ENCODE measurements at regions of chr1 and their contacts with region 1.

Region 1: DNA sequence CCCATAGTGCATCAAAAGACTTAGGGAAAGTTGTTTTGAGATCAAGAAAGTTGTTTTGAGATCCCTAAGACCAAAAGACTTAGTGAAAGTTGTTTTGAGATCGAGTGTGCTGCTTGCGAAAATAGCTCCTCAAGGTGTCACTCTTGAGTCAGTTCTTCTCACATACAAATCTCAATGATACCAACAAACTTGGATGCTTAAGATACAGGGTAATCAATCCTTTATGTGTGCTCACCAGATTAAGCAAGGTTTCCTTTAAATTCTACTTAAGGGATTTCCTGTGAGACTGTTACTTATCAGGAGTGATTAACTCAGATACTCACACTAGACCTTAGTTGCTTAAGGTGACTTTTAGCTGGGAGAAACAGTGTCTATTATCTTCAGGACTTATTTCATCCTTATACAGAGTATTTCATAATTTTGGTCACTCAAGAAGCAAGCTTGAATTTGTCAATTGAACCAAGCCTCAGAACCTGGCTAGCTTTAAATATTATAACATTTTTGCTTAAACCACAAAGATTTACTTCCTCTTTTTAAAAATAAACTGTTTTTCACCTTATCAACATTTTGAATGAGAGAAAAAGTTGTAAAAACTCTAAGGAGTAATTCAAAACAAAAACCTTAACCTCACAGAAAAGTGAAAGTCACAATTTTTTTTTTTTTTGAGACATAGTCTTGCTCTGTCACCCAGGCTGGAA is 8.0 kb upstream of the RLF start:
- DNase-seq: peak in 3 of 4 experiments; percentile 25 to 78 (median 31)
- ATAC-seq: peak; percentile 84
- H3K4me3 ChIP-seq: no peak overlapping the region
- H3K27ac ChIP-seq: 0 out of 3 replicates have a peak overlapping the region, but pooled peaks have one; percentile 1
- H3K4me1 ChIP-seq: peaks cover 0 to 4% of the 10 kb centered on the region in 2 experiments; a peak in 4 of 5 replicates
- H3K27me3 ChIP-seq: no peaks in the 10 kb centered on the region
- CTCF ChIP-seq: peak; percentile 69 to 88 (median 86)
- EP300 ChIP-seq: no peak
- POLR2A ChIP-seq: no peak
- RAD21 ChIP-seq: peak; percentile 76 to 93

Region 2: GRCh38 chr1:40305457-40305856 is 152.2 kb after region 1 on chr1:
- CTCF ChIA-PET with region 1: interaction called, 3 read pairs
- POLR2A ChIA-PET with region 1: interaction called, 5 read pairs
- in situ Hi-C with region 1: loop called (anchors 10 kb)
- intact Hi-C with region 1: loop called (anchors 1 kb)
- DNase-seq: peak in 2 of 4 experiments; percentile 55 to 62
- ATAC-seq: peak; percentile 84
- H3K4me3 ChIP-seq: no peak overlapping the region
- H3K27ac ChIP-seq: no peak overlapping the region
- H3K4me1 ChIP-seq: peaks cover 0 to 20% of the 10 kb centered on the region in 2 experiments; a peak in 1 of 5 replicates
- H3K27me3 ChIP-seq: peaks cover 0 to 10% of the 10 kb centered on the region in 2 experiments; a peak in 2 of 5 replicates
- CTCF ChIP-seq: peak; percentile 74 to 78 (median 76)
- EP300 ChIP-seq: no peak
- POLR2A ChIP-seq: no peak
- RAD21 ChIP-seq: peak; percentile 36 to 89; a peak in 3 of 4 replicates

Region 3: GRCh38 chr1:40315239-40315794 is 162.1 kb after region 1 on chr1:
- CTCF ChIA-PET with region 1: interaction called, 3 read pairs
- POLR2A ChIA-PET with region 1: interaction called, 12 read pairs
- in situ Hi-C with region 1: no loop called
- intact Hi-C with region 1: no loop called
- DNase-seq: peak; percentile 90 to 93 (median 90)
- ATAC-seq: peak; percentile 87
- H3K4me3 ChIP-seq: no peak overlapping the region
- H3K27ac ChIP-seq: peak overlapping the region; percentile 31; the same call in 1 of the 3 replicates
- H3K4me1 ChIP-seq: peaks cover 36 to 67% of the 10 kb centered on the region in 2 experiments
- H3K27me3 ChIP-seq: no peaks in the 10 kb centered on the region
- CTCF ChIP-seq: peak; percentile 93 to 95 (median 95)
- EP300 ChIP-seq: 0 out of 2 replicates have a peak, but pooled peaks have one; percentile 21
- POLR2A ChIP-seq: peak; percentile 43; the same call in 1 of the 2 replicates
- RAD21 ChIP-seq: peak; percentile 64 to 85

Region 4: DNA sequence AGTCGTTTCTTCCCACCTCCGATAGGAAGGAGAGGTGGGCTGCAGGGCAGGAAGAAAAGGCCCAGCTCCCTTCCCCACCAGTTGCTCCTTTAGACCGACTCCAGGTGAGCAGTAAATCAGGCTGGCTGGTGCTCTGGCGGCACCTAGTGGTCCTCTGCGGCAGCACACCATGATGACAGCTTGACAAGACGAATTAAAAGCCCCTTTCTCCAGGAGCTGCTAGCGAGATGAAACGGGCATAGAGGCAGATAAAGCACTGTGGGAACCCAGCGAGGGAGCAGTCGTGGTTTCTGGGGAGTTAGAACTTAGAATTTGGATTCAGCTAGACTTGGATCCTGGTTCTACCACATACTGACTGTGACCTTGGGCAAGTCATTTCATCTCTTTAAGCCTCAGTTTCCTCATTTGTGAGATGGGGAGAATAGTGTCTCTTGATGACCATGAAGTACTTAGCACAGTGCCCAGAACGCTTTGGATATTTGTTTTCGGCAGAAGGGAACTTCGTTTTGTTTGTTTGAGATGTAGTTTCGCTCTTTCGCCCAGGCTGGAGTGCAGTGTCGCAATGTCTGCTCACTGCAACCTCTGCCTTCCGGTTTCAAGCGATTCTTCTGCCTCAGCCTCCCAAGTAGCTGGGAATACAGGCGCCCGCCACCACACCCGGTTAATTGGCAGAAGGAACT is 185.7 kb after region 1 on chr1:
- CTCF ChIA-PET with region 1: interaction called, 10 read pairs
- POLR2A ChIA-PET with region 1: interaction called, 4 read pairs
- in situ Hi-C with region 1: loop called (anchors 5 kb)
- intact Hi-C with region 1: no loop called
- DNase-seq: peak; percentile 82 to 93 (median 84)
- ATAC-seq: peak; percentile 90
- H3K4me3 ChIP-seq: no peak overlapping the region
- H3K27ac ChIP-seq: no peak overlapping the region
- H3K4me1 ChIP-seq: peaks cover 15 to 21% of the 10 kb centered on the region in 2 experiments; a peak in 4 of 5 replicates
- H3K27me3 ChIP-seq: no peaks in the 10 kb centered on the region
- CTCF ChIP-seq: peak; percentile 96 to 100 (median 98)
- EP300 ChIP-seq: no peak
- POLR2A ChIP-seq: no peak
- RAD21 ChIP-seq: peak; percentile 93 to 97

Region 5: GRCh38 chr1:42046761-42047507 is 1893.7 kb after region 1 on chr1:
- CTCF ChIA-PET with region 1: no interaction called
- POLR2A ChIA-PET with region 1: no interaction called
- in situ Hi-C with region 1: no loop called
- intact Hi-C with region 1: no loop called
- DNase-seq: no peak
- ATAC-seq: no peak
- H3K4me3 ChIP-seq: no peak overlapping the region
- H3K27ac ChIP-seq: no peak overlapping the region
- H3K4me1 ChIP-seq: no peaks in the 10 kb centered on the region
- H3K27me3 ChIP-seq: peaks cover 2 to 4% of the 10 kb centered on the region in 2 experiments; a peak in 2 of 5 replicates
- CTCF ChIP-seq: no peak
- EP300 ChIP-seq: no peak
- POLR2A ChIP-seq: no peak
- RAD21 ChIP-seq: no peak

Measured in K562 (cell line).